Esophagus muscularis mucosa (tissue), 4 donors: ENCODE measurements at regions of chr5 and their contacts with region 1.

Region 1: DNA sequence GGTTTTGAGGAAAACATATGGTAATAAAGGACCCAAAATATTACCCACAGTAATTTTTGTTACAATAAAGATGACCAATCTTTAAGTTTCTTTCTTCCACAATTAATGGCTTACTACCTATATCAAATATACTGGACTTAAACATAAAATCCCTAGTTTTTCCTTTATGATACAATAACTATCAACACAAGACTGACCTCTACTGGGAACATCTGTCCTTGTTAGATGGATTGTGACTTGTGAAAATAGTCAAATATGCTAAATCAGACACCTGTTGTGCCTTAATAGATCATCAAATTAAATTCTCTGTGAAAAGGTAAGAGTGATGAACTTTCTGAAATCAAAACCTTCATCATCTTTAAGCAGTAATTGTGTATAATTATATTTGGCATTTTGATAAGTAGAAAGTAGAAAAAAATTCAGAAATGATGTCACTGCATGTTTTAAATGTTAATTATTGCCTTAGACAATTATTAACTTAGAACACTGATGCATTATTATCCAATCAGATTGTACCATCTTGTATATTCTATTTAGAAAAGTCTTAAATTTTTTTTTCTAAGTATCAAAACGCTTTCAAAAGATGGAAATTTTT is 113.6 kb downstream of the DEPDC1B start:
- DNase-seq: no peak
- H3K4me3 ChIP-seq: no peak overlapping the region
- H3K27ac ChIP-seq: no peak overlapping the region
- H3K4me1 ChIP-seq: peaks cover 0 to 8% (median 7%) of the 10 kb centered on the region in 4 donors
- H3K27me3 ChIP-seq: no peaks in the 10 kb centered on the region
- CTCF ChIP-seq: peak; percentile 44 to 55 (median 53)
- EP300 ChIP-seq: no peak
- POLR2A ChIP-seq: no peak

Region 2: DNA sequence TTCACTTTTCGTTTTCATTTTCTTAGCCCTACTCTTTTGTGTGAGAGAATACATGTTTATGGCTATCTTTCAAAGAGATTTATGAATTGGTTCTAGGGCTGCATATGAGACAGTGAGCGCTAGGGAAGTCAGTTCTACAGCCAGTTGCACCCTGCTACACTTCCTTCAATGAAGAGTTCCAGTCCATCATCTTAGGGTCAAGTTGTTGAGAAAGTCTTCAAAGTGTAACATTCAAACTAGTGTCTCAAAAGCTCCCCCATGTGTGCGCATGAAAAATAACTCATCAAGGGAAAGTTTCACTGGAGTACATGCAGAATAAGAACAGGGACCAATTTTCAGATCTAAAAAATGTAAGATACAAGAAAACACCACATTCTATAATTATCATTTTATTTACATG is 203.7 kb before region 1 on chr5:
- intact Hi-C with region 1: loop called (anchors 10 kb)
- DNase-seq: no peak
- H3K4me3 ChIP-seq: no peak overlapping the region
- H3K27ac ChIP-seq: no peak overlapping the region
- H3K4me1 ChIP-seq: peaks cover 0 to 62% (median 42%) of the 10 kb centered on the region in 4 donors
- H3K27me3 ChIP-seq: no peaks in the 10 kb centered on the region
- CTCF ChIP-seq: peak; percentile 27 to 49 (median 29)
- EP300 ChIP-seq: no peak
- POLR2A ChIP-seq: no peak

Region 3: GRCh38 chr5:60540856-60541805 is 45.3 kb before region 1 on chr5:
- intact Hi-C with region 1: no loop called
- DNase-seq: no peak
- H3K4me3 ChIP-seq: no peak overlapping the region
- H3K27ac ChIP-seq: peak overlapping the region; percentile 48 to 67 (median 62)
- H3K4me1 ChIP-seq: peaks cover 9 to 68% (median 61%) of the 10 kb centered on the region in 4 donors
- H3K27me3 ChIP-seq: no peaks in the 10 kb centered on the region
- CTCF ChIP-seq: no peak
- EP300 ChIP-seq: no peak
- POLR2A ChIP-seq: no peak

Region 4: GRCh38 chr5:60699530-60700382 is 113.4 kb after region 1 on chr5 and contains the start of gene DEPDC1B:
- intact Hi-C with region 1: no loop called
- DNase-seq: peak; percentile 95
- H3K4me3 ChIP-seq: peak within 1 kb of the TSS; percentile 74 to 90 (median 79)
- H3K27ac ChIP-seq: peak within 1 kb of the TSS; percentile 71 to 87 (median 84)
- H3K4me1 ChIP-seq: peaks cover 14 to 21% (median 20%) of the 10 kb centered on the region in 4 donors
- H3K27me3 ChIP-seq: no peaks in the 10 kb centered on the region
- CTCF ChIP-seq: no peak
- EP300 ChIP-seq: no peak
- POLR2A ChIP-seq: no peak
- total RNA-seq, gene DEPDC1B: 0.17 to 0.57 (median 0.42) TPM in 3 of 4 donors, not detected in the other